Activated CD4-positive, alpha-beta T cell treated with anti-CD3 and anti-CD28 coated beads, Interleukin-2, amount 10 ng/mL, durations not matched to agents 24 days and 14 days (primary cell): ENCODE measurements at regions of chr17 and their contacts with region 1.

Region 1: DNA sequence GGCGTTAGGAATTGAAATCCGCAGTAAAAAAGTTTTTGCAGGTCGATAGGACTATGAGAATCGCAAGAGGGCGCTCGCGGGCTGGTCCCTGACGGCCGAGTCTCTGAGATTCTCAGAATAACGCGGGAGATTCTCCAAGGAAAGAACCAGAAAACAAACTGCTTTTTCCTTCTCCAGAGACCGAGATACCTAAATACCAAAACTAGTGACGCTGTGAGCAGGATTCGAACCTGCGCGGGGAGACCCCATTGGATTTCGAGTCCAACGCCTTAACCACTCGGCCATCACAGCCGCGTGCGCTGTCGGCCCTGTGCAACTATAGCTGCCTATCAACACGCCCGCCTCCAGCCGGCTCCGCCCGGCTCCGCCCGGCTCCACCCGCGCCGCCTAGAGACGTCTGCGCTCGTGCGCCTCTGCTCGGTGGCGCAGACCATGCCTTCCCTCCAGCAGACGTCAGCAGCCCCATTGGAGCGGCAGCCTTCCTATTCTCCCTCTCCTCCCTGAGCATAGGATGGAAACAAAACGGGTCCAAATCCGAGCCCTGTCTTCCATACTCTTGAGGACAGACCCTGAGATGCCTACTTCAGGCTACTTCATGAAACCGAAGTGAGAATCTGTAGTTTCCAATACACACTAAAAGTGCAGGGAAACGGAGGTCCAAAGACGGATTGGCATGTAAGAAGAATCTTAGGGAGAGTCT is 13.4 kb downstream of the PER1 start:
- DNase-seq: peak; percentile 99
- H3K4me3 Mint-ChIP-seq: no peak overlapping the region
- H3K27ac Mint-ChIP-seq: no peak overlapping the region
- H3K4me1 Mint-ChIP-seq: peaks cover 4% of the 10 kb centered on the region
- H3K27me3 Mint-ChIP-seq: peaks cover 5% of the 10 kb centered on the region

Region 2: GRCh38 chr17:7972131-7972785 is 166.6 kb before region 1 on chr17:
- intact Hi-C with region 1: no loop called
- DNase-seq: no peak
- H3K4me3 Mint-ChIP-seq: no peak overlapping the region
- H3K27ac Mint-ChIP-seq: no peak overlapping the region
- H3K4me1 Mint-ChIP-seq: no peaks in the 10 kb centered on the region
- H3K27me3 Mint-ChIP-seq: peaks cover 12% of the 10 kb centered on the region

Region 3: GRCh38 chr17:8126531-8127066 is 12.2 kb before region 1 on chr17:
- intact Hi-C with region 1: loop called (anchors 1 kb)
- DNase-seq: peak; percentile 86
- H3K4me3 Mint-ChIP-seq: peak overlapping the region; percentile 91
- H3K27ac Mint-ChIP-seq: peak overlapping the region; percentile 88
- H3K4me1 Mint-ChIP-seq: peaks cover 42% of the 10 kb centered on the region
- H3K27me3 Mint-ChIP-seq: peaks cover 47% of the 10 kb centered on the region

Region 4: GRCh38 chr17:8156246-8156992 is 17.6 kb after region 1 on chr17:
- intact Hi-C with region 1: loop called (anchors 1 kb)
- DNase-seq: peak; percentile 100
- H3K4me3 Mint-ChIP-seq: no peak overlapping the region
- H3K27ac Mint-ChIP-seq: no peak overlapping the region
- H3K4me1 Mint-ChIP-seq: peaks cover 62% of the 10 kb centered on the region
- H3K27me3 Mint-ChIP-seq: no peaks in the 10 kb centered on the region

Region 5: DNA sequence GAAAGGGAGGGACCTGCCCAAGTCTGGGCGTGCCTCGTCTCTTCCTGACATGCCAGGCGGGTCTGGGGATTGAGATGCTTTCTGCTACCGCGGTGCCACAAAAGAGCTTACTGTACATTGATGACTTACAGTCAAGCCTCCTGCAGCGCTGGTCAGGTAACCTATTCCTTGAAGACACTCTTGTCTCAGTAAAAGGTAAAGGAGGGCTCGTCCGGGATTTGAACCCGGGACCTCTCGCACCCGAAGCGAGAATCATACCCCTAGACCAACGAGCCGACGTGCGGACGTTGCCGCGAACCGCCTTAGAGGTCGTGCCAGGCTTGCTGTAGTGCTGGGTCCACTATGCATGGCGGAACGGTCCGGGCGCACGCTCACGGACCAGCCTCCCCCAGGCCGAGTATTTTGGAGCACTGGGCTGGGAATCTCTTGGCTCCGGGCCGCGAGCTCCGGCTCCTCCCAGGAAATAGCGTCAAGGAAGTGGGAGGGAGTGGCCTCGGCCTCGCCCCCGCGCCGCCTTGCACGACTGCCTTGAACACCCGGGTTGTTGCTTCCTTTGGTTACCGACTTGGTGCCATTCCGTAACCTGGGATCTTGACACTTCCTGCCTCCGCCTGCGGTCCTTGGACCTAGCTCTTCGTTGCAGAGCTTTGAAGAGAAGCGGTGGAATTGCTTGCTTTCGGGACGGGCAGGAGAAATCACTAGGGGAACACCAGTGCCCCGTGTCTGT is 84.0 kb after region 1 on chr17:
- intact Hi-C with region 1: loop called (anchors 1 kb)
- DNase-seq: peak; percentile 96
- H3K4me3 Mint-ChIP-seq: peak overlapping the region; percentile 98
- H3K27ac Mint-ChIP-seq: peak overlapping the region; percentile 93
- H3K4me1 Mint-ChIP-seq: peaks cover 60% of the 10 kb centered on the region
- H3K27me3 Mint-ChIP-seq: peaks cover 7% of the 10 kb centered on the region

Region 6: DNA sequence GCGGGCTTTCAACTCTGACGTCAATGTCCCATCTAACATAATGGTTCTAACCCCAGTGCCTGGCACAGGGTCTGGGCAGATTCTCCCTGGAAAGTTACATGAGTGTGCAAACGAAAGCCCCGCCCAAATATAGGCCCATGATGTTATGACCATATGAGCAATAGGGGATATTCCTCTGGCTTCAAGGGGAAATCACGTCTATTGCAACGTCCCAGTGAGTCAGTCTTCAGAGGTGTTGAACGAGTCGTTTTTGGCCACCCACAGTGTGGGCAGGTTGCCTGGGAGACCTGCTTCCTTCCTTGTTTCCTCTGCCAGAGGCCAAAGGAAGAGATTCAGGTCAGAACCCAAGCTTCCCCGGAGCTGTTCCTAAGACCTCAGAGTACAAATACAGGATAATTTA is 796.4 kb after region 1 on chr17:
- intact Hi-C with region 1: loop called (anchors 5 kb)
- DNase-seq: peak; percentile 79
- H3K4me3 Mint-ChIP-seq: peak overlapping the region; percentile 74
- H3K27ac Mint-ChIP-seq: peak overlapping the region; percentile 97
- H3K4me1 Mint-ChIP-seq: peaks cover 57% of the 10 kb centered on the region
- H3K27me3 Mint-ChIP-seq: no peaks in the 10 kb centered on the region